ENCODE measurements at regions of chrX and their contacts with region 1.

Region 1: DNA sequence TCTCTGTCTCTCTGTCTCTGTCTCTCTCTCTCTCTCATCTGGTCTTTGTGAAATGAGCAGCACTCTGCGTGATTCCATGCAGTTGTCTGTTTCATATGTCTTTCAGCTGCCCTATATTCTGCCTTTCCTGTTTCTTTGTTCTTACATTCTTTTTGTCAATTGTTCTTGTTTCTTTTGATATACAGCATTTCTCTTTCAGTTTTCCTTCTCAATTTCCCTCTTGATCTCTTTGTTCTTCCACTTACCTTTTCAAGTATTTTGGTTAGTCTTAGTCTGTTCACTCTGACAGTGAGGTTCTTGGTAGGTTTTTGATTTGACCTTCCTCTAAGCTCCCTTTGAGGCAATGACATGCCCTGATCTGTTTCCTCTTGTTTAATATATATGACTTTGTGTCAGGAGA is 20.4 kb downstream of the ZNF157 start:
- DNase-seq: no peak
- H3K4me3 ChIP-seq: no peak overlapping the region
- H3K4me1 ChIP-seq: no peaks in the 10 kb centered on the region
- H3K27me3 ChIP-seq: no peaks in the 10 kb centered on the region

Region 2: DNA sequence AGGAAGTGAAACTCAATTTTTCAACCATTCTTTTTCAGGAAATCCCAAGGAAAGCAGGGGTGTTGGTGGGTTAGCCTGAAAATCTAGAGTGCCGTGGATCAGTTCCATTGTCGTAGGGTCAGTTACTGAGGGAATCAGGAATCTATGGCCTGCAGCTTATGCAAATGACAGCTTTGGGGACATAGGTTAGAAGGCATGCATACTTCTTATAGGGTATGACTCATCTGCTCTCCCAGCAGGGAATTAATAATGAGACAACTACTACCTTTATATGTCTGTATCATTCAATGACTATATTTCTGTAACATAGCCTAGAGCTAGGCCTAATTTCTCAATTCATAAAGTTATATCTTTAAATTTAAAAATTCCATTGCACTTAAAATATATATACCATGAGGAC is 55.7 kb after region 1 on chrX:
- in situ Hi-C with region 1: loop called (anchors 5 kb)
- DNase-seq: no peak
- H3K4me3 ChIP-seq: no peak overlapping the region
- H3K4me1 ChIP-seq: no peaks in the 10 kb centered on the region
- H3K27me3 ChIP-seq: no peaks in the 10 kb centered on the region

Region 3: GRCh38 chrX:47595716-47596251 is 205.0 kb after region 1 on chrX:
- in situ Hi-C with region 1: no loop called
- DNase-seq: no peak
- H3K4me3 ChIP-seq: no peak overlapping the region
- H3K4me1 ChIP-seq: no peaks in the 10 kb centered on the region
- H3K27me3 ChIP-seq: 0 out of 2 replicates have a peak, but pooled peaks cover 8% of the 10 kb centered on the region

Measured in HAP-1 (cell line).